Panc1 (cell line): ENCODE measurements at regions of chr6 and their contacts with region 1.

Region 1: DNA sequence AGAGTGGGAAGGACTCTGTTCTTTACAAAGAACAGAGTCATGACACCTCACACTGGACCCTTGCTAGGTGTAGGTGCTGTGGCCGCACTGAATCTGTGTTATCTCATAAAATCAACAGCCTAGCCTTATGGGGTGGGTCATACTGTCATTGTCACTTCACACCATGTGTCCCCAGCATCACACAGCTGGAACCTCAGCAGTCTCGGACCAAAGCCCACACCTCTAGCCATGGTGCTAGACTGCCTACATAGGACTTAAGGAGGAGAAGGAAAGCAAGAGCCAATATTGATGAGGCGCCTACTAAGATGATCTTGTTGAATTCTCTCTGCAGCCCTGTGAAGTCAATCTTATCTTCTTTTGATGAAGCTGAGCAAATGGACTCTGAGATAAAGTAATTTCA is 31.0 kb downstream of the UNC5CL start:
- DNase-seq: no peak
- ATAC-seq: no peak
- H3K4me3 ChIP-seq: no peak overlapping the region
- H3K27ac ChIP-seq: peak overlapping the region; percentile 71; the same call in 1 of the 2 replicates
- H3K4me1 ChIP-seq: no peaks in the 10 kb centered on the region; the same call in none of the 2 replicates
- H3K27me3 ChIP-seq: no peaks in the 10 kb centered on the region
- CTCF ChIP-seq: no peak

Region 2: GRCh38 chr6:40599555-40599954 is 408.5 kb before region 1 on chr6:
- CTCF ChIA-PET with region 1: no interaction called
- POLR2A ChIA-PET with region 1: no interaction called
- in situ Hi-C with region 1: no loop called
- intact Hi-C with region 1: no loop called
- DNase-seq: no peak
- ATAC-seq: no peak
- H3K4me3 ChIP-seq: no peak overlapping the region
- H3K27ac ChIP-seq: no peak overlapping the region
- H3K4me1 ChIP-seq: no peaks in the 10 kb centered on the region
- H3K27me3 ChIP-seq: peaks cover 10% of the 10 kb centered on the region
- CTCF ChIP-seq: no peak

Region 3: DNA sequence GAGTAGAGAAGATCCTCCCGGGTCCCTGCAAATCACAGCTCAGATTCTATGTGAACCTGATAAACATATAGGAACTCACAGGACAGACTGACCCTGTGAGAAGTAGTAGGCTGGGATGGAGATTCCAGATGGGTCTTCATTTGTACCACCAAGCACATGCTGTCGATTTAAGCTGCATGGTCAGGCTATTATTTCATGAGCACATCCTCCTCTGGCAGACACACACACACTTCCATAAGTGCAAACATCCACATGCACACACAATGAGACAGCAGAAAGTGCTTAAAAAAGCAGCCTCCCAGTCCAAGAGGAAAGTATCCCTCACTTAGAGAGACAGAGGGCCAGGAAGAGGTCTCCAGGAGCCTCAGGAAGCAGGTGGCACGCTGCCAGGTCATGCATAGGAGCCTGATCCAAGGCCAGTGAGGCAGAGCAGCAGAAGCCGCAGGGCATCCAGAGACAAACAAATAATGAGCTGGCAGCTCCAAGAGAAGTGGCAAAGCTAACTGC is 100.8 kb before region 1 on chr6:
- CTCF ChIA-PET with region 1: no interaction called
- POLR2A ChIA-PET with region 1: no interaction called
- in situ Hi-C with region 1: no loop called
- intact Hi-C with region 1: loop called (anchors 5 kb)
- DNase-seq: peak; percentile 65
- ATAC-seq: peak; percentile 91
- H3K4me3 ChIP-seq: no peak overlapping the region
- H3K27ac ChIP-seq: peak overlapping the region; percentile 85
- H3K4me1 ChIP-seq: peaks cover 33% of the 10 kb centered on the region
- H3K27me3 ChIP-seq: no peaks in the 10 kb centered on the region
- CTCF ChIP-seq: no peak

Region 4: DNA sequence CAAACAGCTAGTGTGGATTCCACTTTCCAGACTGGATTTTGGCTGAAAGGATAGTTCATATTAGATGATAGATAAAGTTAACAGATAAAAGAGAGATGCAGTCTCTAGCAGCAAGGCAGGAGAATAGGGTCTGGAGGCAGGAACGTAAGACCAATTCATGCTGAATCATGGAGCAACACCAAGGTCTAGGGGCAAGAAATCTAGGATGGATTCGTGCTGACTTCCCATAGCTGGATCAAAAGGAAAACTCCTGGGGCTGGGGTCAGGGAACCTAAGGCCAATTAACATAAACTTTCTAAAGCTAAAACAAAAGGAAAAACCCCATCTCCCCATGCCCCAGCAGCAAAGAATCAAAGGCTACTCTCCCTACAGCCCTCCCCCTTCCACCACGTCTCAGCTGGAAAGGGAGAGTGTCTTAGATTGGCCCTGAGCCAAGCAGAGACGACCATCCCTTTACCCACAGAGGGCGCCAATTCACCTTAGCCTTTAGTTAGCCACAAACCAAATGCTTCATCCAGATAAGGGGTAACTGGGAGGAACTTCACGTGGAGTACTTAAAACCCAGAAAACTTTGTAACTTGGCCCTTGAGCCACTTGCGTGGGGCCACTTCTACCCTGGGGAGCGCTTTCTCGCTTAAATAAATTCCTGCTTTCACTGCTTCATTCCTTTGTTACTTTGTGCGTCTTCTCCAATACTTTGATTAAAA is 270.8 kb after region 1 on chr6:
- CTCF ChIA-PET with region 1: no interaction called
- POLR2A ChIA-PET with region 1: no interaction called
- in situ Hi-C with region 1: no loop called
- intact Hi-C with region 1: no loop called
- DNase-seq: peak; percentile 22
- ATAC-seq: no peak; the same call in 1 of the 2 replicates
- H3K4me3 ChIP-seq: no peak overlapping the region
- H3K27ac ChIP-seq: no peak overlapping the region
- H3K4me1 ChIP-seq: no peaks in the 10 kb centered on the region
- H3K27me3 ChIP-seq: peaks cover 13% of the 10 kb centered on the region
- CTCF ChIP-seq: peak; percentile 73

Region 5: GRCh38 chr6:41689171-41690008 is 681.4 kb after region 1 on chr6:
- CTCF ChIA-PET with region 1: no interaction called
- POLR2A ChIA-PET with region 1: no interaction called
- in situ Hi-C with region 1: no loop called
- intact Hi-C with region 1: no loop called
- DNase-seq: no peak
- ATAC-seq: no peak
- H3K4me3 ChIP-seq: no peak overlapping the region
- H3K27ac ChIP-seq: no peak overlapping the region
- H3K4me1 ChIP-seq: no peaks in the 10 kb centered on the region
- H3K27me3 ChIP-seq: no peaks in the 10 kb centered on the region
- CTCF ChIP-seq: no peak